ENCODE measurements at regions of chr16 and their contacts with region 1.

Region 1: GRCh38 chr16:17343028-17343427 is 127.7 kb downstream of the XYLT1 start:
- DNase-seq: no peak
- H3K4me3 ChIP-seq: no peak overlapping the region
- H3K27ac ChIP-seq: peak overlapping the region in 1 of 2 donors; percentile 1
- H3K4me1 ChIP-seq: peaks cover 17% of the 10 kb centered on the region
- H3K27me3 ChIP-seq: no peaks in the 10 kb centered on the region
- CTCF ChIP-seq: no peak
- POLR2A ChIP-seq: no peak

Region 2: DNA sequence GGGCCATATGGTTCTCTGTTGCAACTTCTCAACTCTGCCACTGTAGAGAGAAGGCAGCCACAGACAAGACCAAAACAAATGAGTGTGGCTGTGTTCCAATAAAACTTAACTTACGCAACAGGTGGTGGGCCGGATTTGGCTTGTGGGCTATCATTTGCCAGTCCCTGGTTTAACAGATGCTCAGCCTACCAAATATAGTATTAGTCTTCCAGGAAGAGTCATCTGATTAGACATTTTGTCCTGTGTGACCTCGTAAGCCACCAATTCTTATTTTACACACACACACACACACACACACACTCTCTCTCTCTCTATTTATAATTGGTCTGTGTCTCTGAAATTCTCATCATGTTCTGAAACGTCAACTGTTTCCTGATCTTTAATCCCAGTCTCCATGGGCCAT is 118.1 kb before region 1 on chr16:
- intact Hi-C with region 1: loop called (anchors 10 kb)
- DNase-seq: peak; percentile 69
- H3K4me3 ChIP-seq: no peak overlapping the region
- H3K27ac ChIP-seq: peak overlapping the region; percentile 3 to 15
- H3K4me1 ChIP-seq: no peaks in the 10 kb centered on the region
- H3K27me3 ChIP-seq: no peaks in the 10 kb centered on the region
- CTCF ChIP-seq: peak in 1 of 4 experiments; percentile 5
- POLR2A ChIP-seq: no peak

Region 3: DNA sequence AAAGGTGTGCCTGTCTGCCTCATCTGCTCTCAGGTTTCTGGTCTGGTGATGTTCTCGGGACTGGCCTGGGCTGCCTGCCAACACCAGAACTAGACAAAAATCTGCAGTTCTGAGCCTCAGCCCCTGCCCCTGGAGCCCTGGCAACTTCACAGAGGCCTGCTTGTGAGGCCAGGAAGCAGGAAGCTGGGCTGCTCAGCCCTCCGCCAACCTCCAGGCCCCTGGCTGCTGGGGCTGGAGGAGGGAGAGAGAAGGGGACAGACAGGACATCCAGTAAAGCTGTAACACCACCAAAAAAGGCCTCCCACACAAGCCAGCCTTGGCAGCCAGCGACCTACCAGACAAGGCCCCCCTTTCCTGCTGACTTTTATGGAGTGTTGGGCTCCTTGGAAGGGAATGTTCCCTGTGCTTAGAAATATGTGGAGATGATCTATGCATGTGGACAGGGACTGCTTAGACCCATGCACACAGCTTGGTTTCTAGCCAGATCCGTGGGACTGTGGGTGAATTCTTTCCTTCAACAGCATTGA is 29.9 kb before region 1 on chr16:
- intact Hi-C with region 1: loop called (anchors 5 kb)
- DNase-seq: peak; percentile 73
- H3K4me3 ChIP-seq: no peak overlapping the region
- H3K27ac ChIP-seq: peak overlapping the region; percentile 82 to 86
- H3K4me1 ChIP-seq: peaks cover 9% of the 10 kb centered on the region
- H3K27me3 ChIP-seq: no peaks in the 10 kb centered on the region
- CTCF ChIP-seq: no peak
- POLR2A ChIP-seq: no peak

Region 4: DNA sequence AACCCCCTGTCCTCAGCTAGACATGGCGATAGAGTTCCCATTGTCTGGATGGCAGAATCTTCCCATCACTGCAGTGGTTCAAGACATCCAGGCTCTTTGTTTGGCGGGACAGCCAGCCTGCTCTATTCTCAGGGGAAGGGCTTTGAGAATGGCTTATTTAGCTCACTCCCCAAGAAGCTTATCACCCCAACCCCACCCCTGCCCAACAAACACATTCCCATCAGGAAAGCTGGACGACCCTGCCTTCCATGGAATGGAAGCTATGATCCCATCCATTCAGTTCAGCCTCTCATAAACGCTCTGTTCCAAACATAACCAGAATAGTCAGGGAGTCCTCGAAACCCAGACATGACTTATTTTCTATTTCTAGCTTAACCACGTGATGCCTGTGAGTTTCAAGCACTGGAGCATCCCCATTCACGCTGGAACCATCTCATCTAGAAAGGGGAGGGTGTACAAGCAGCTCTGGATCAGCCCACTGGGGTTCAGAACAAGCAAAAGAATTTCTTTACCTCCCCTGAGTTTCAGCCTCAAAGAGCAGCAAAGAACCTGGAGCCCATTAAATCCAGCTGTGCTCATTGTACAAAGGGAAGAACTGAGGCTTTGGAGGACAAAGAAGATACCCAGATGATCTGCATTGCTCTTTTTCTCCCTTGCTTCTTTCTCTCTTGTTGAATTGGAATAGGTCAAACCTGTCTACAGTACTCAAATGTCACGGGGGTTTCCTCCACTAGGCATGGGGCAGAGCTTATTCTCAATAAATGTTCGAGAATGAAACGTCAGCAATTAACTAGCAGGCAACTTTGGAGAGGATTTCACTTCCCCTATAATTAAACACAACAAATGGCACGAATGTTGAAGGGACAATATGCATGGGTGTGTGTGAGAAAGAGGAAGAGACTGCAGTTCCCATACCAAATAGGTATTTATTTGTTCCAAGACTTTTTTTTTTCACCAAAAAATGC is 34.6 kb after region 1 on chr16:
- intact Hi-C with region 1: loop called (anchors 2 kb)
- DNase-seq: no peak
- H3K4me3 ChIP-seq: no peak overlapping the region
- H3K27ac ChIP-seq: peak overlapping the region in 1 of 2 donors; percentile 3
- H3K4me1 ChIP-seq: peaks cover 14% of the 10 kb centered on the region
- H3K27me3 ChIP-seq: no peaks in the 10 kb centered on the region
- CTCF ChIP-seq: no peak
- POLR2A ChIP-seq: no peak

Region 5: DNA sequence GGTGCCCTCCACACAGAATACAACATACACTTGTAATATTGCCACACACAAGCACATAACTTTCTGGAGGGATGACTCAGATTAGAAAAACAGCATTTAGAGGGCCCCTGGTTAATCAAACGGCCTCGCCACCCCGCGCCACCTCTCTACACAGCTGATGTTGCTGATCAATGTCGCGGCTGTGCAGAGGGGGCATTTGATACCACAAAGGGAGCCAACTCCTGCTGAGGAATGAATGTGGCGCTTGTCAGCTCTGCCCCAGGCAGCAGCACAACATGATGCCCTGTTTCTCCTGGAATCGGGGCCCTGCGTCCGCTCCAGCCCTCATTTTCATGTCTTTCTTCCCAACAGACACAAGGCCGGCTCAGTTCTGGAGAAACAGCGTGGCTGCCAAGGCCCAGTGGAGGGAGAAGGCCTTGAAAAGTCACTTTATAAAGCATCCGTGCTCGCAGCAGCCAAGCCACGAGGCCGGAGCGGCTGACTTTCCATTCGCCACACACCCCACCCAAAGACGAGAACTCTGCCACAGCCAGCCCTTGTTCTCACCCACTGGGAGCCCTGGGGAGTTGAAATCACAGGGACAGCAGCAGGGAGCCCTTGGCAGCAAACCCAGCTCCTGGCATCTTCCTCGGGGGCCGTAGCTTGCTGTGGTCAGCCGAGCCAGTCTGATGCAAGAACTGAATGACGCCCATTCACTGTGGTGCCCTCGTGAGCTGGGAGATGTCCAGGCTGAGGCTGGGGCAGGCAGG is 62.1 kb after region 1 on chr16:
- intact Hi-C with region 1: loop called (anchors 5 kb)
- DNase-seq: no peak
- H3K4me3 ChIP-seq: no peak overlapping the region
- H3K27ac ChIP-seq: peak overlapping the region; percentile 18 to 42
- H3K4me1 ChIP-seq: no peaks in the 10 kb centered on the region
- H3K27me3 ChIP-seq: no peaks in the 10 kb centered on the region
- CTCF ChIP-seq: no peak
- POLR2A ChIP-seq: no peak